Activated T-helper 1 cell treated with anti-CD3 and anti-CD28 coated beads, Interleukin-12 subunit alpha, Interleukin-12 subunit beta, Interleukin-2, Interleukin-4 antibody, amounts not matched to agents 30 ng/mL and 10 ng/mL and 1 ng/mL, durations not matched to agents 14 hours and 24 hours and 36 hours (primary cell): ENCODE measurements at regions of chr18 and their contacts with region 1.

Region 1: GRCh38 chr18:56748698-56749268 is 97.6 kb downstream of the WDR7 start:
- DNase-seq: no peak
- H3K4me3 Mint-ChIP-seq: no peak overlapping the region
- H3K27ac Mint-ChIP-seq: no peak overlapping the region
- H3K4me1 Mint-ChIP-seq: peaks cover 22% of the 10 kb centered on the region
- H3K27me3 Mint-ChIP-seq: no peaks in the 10 kb centered on the region

Region 2: GRCh38 chr18:56727399-56727798 is 21.4 kb before region 1 on chr18:
- intact Hi-C with region 1: loop called (anchors 2 kb)
- DNase-seq: no peak
- H3K4me3 Mint-ChIP-seq: peak overlapping the region; percentile 4
- H3K27ac Mint-ChIP-seq: peak overlapping the region; percentile 35
- H3K4me1 Mint-ChIP-seq: peaks cover 12% of the 10 kb centered on the region
- H3K27me3 Mint-ChIP-seq: no peaks in the 10 kb centered on the region

Region 3: GRCh38 chr18:56789004-56789888 is 40.5 kb after region 1 on chr18:
- intact Hi-C with region 1: no loop called
- DNase-seq: no peak
- H3K4me3 Mint-ChIP-seq: no peak overlapping the region
- H3K27ac Mint-ChIP-seq: no peak overlapping the region
- H3K4me1 Mint-ChIP-seq: no peaks in the 10 kb centered on the region
- H3K27me3 Mint-ChIP-seq: no peaks in the 10 kb centered on the region

Region 4: GRCh38 chr18:57015451-57015850 is 266.7 kb after region 1 on chr18:
- intact Hi-C with region 1: loop called (anchors 5 kb)
- DNase-seq: no peak
- H3K4me3 Mint-ChIP-seq: no peak overlapping the region
- H3K27ac Mint-ChIP-seq: no peak overlapping the region
- H3K4me1 Mint-ChIP-seq: peaks cover 19% of the 10 kb centered on the region
- H3K27me3 Mint-ChIP-seq: no peaks in the 10 kb centered on the region

Region 5: DNA sequence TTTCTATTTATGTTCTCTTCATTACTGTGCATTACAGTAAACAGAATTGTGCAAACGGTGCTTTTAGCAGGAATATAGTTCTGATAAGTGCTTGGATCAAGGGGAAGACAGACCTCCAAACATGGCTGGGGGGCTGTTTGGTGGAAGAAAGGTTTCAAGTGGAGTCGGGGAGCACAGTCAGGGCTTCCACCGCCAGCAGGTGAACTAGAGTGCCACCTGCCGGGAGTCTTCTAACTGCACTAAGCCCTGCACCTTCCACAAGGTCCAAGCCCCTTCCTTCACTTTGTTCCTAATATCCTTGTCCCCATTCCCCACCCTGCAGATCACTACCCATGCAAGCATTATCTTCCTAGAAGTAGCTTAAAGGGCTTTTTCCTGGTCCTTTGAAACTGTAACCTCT is 697.5 kb after region 1 on chr18:
- intact Hi-C with region 1: loop called (anchors 1 kb)
- DNase-seq: no peak
- H3K4me3 Mint-ChIP-seq: no peak overlapping the region
- H3K27ac Mint-ChIP-seq: no peak overlapping the region
- H3K4me1 Mint-ChIP-seq: no peaks in the 10 kb centered on the region
- H3K27me3 Mint-ChIP-seq: peaks cover 25% of the 10 kb centered on the region